Transverse colon (tissue), 4 donors: ENCODE measurements at regions of chr9 and their contacts with region 1.

Region 1: GRCh38 chr9:111597817-111598729 is 1.4 kb downstream of the PTGR1 start:
- DNase-seq: peak; percentile 71
- H3K4me3 ChIP-seq: peak overlapping the region; percentile 47 to 78 (median 77)
- H3K27ac ChIP-seq: peak overlapping the region; percentile 89 to 94 (median 91)
- H3K4me1 ChIP-seq: peaks cover 0 to 5% (median 5%) of the 10 kb centered on the region in 4 donors
- H3K27me3 ChIP-seq: no peaks in the 10 kb centered on the region
- CTCF ChIP-seq: peak; percentile 64 to 72 (median 71)
- EP300 ChIP-seq: no peak
- POLR2A ChIP-seq: no peak

Region 2: DNA sequence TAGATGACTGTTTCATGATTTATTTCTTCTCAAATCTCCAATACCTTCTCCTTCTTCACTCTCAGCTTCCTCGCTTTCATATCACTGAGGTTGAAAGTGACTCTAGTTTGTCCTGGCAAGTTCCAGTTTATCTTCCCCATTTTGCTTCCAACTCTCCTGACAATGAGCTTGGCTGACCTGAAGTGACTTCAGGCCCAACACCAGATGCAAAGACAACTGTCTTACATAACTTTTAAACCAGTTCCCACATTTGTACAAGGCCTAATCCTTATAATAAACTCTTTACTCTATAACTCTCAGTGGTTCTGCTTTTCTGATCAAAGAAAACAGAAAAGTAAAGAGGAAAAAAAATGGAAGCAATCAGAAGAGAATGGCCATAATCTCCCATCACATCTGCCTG is 85.3 kb after region 1 on chr9:
- in situ Hi-C with region 1: loop called in 1 of 4 experiments (anchors 10 kb)
- intact Hi-C with region 1: no loop called
- DNase-seq: no peak
- H3K4me3 ChIP-seq: no peak overlapping the region
- H3K27ac ChIP-seq: no peak overlapping the region
- H3K4me1 ChIP-seq: no peaks in the 10 kb centered on the region
- H3K27me3 ChIP-seq: no peaks in the 10 kb centered on the region
- CTCF ChIP-seq: no peak
- EP300 ChIP-seq: no peak
- POLR2A ChIP-seq: no peak

Region 3: GRCh38 chr9:112404508-112404932 is 806.4 kb after region 1 on chr9:
- in situ Hi-C with region 1: no loop called
- intact Hi-C with region 1: no loop called
- DNase-seq: no peak
- H3K4me3 ChIP-seq: no peak overlapping the region
- H3K27ac ChIP-seq: no peak overlapping the region
- H3K4me1 ChIP-seq: no peaks in the 10 kb centered on the region
- H3K27me3 ChIP-seq: no peaks in the 10 kb centered on the region
- CTCF ChIP-seq: no peak
- EP300 ChIP-seq: no peak
- POLR2A ChIP-seq: no peak

Region 4: GRCh38 chr9:112774006-112774996 is 1176.2 kb after region 1 on chr9:
- in situ Hi-C with region 1: no loop called
- intact Hi-C with region 1: no loop called
- DNase-seq: no peak
- H3K4me3 ChIP-seq: no peak overlapping the region
- H3K27ac ChIP-seq: no peak overlapping the region
- H3K4me1 ChIP-seq: peaks cover 0 to 31% (median 8%) of the 10 kb centered on the region in 4 donors
- H3K27me3 ChIP-seq: no peaks in the 10 kb centered on the region
- CTCF ChIP-seq: no peak
- EP300 ChIP-seq: no peak
- POLR2A ChIP-seq: no peak